Left cardiac atrium (tissue), 4 donors: ENCODE measurements at regions of chr1 and their contacts with region 1.

Region 1: DNA sequence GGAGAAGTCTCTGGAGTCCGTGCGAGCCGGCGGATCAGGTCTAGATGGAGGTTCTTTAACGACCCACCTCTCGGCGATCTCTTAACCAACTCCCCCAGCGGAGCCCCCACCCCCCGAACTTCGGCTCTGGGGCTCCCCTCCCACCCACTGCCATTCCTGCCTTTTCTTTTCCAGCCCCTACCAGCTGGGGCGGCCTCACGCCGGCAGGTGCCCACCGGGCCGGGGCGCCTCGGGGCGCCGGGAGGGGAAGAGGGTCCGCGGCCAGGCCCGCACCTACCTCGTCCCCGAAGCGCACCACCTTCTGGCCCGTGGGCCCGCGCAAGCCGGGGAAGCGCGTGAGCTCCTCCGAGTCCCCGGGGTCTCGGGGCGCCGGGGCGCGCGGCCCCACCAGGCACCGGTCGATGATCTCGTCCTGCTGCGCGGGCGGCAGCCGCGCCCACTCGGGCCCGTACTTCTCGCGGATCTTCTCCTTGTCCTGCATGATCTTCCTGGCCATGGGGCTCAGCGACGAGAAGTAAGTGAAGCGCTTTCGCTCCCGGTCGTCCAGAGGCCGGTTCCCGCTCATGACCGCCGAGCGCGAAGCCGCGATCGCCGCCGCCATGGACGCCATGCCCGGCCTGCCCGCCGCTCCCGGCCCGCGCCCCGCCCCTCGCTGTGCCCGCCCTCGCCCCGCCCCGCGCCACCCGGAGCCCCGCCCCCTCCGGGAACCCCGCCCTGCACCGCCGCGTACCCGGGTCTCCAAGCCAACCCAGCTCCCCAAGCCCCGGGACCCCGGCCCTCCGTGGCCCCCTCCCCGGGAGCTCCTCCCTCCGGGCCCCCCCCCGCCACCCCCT is at the start of gene C1orf198:
- DNase-seq: peak; percentile 77
- ATAC-seq: peak; percentile 94
- total RNA-seq, gene C1orf198: 51.8 to 54.8 TPM

Region 2: GRCh38 chr1:230849451-230850224 is 18.5 kb before region 1 on chr1:
- intact Hi-C with region 1: loop called in 1 of 2 experiments (anchors 2 kb)
- DNase-seq: peak; percentile 84
- ATAC-seq: peak; percentile 93 to 94

Region 3: DNA sequence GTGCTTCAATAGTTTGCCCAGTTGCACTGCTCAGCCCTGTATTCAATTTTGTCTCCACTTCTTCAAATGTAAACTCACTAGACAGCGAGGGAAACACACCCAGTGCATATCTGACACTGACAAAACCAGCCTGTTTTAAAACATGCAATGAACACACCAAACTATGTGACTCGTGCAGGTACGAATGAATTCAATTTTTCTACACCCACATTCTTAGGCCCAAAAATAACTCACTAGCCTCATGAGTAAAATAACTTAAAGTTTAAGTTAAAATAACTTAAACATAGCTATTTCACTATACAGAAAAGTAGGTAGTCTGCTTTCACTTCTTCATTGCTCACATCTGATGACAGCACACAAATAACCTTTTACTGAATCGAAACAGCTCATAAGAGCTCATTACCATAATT is 89.5 kb after region 1 on chr1:
- intact Hi-C with region 1: no loop called
- DNase-seq: no peak
- ATAC-seq: no peak